ENCODE measurements at regions of chr13 and their contacts with region 1.

Region 1: DNA sequence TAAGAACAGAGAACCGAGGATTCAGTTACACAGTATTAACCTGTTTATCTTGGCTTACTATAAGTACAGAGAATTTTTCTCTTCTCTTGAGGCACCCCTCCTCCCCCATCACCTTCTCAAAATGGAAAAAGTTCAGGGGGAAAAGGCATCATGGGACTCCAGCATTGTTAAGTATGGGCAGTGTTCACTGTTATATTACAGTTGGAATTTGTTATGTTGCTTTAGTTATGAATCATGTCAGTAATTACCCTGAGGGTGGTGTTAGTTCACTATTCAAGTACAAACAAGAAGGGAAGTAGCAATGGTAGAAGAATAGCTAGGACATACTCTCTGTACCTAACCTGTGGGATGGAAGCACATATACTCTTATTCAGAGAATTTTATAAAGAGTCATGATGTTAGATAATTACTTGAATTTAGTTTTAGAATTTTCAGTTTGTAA is 12.0 kb downstream of the LPAR6 start:
- DNase-seq: no peak
- H3K4me3 Mint-ChIP-seq: peak overlapping the region; percentile 24
- H3K27ac Mint-ChIP-seq: peak overlapping the region; percentile 37
- H3K4me1 Mint-ChIP-seq: peaks cover 61% of the 10 kb centered on the region
- H3K27me3 Mint-ChIP-seq: no peaks in the 10 kb centered on the region

Region 2: GRCh38 chr13:48037346-48038173 is 363.3 kb before region 1 on chr13 and contains the start of gene NUDT15:
- intact Hi-C with region 1: loop called (anchors 5 kb)
- DNase-seq: peak; percentile 94
- H3K4me3 Mint-ChIP-seq: peak within 1 kb of the TSS; percentile 98
- H3K27ac Mint-ChIP-seq: peak within 1 kb of the TSS; percentile 99
- H3K4me1 Mint-ChIP-seq: peaks cover 46% of the 10 kb centered on the region
- H3K27me3 Mint-ChIP-seq: no peaks in the 10 kb centered on the region
- total RNA-seq, gene NUDT15: 15.3 and 16.8 TPM in 2 replicates

Region 3: DNA sequence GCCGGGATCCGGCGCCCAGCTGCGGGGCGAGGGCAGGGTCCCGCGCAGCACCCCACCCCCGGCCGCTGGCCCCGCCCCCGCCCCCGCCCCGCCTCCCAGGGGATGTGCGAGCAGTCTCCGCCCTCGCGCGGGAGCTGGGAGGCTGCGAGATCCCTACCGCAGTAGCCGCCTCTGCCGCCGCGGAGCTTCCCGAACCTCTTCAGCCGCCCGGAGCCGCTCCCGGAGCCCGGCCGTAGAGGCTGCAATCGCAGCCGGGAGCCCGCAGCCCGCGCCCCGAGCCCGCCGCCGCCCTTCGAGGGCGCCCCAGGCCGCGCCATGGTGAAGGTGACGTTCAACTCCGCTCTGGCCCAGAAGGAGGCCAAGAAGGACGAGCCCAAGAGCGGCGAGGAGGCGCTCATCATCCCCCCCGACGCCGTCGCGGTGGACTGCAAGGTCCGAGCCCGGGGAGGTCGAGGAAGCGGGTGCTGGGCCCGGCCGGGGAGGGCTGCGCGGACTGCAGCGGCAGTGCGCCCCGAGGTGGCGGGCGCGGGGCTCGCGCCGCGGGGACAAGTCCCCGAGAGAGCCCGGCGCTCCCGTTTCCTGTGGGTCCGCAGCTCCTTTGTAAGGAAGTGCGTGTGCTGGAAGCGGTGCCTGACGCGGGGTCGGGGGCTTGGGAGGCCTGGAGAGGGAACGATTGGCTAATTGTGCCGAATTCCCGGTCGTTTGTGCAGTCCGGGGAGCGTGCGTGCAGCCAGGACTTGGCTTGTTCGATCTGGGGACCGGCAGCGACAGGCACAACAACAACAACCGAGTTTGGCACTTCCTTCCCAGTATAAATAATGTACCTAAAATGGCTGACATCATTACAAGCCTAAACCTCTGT is 167.6 kb before region 1 on chr13 and contains the start of gene ITM2B:
- intact Hi-C with region 1: loop called (anchors 1 kb)
- DNase-seq: peak; percentile 49
- H3K4me3 Mint-ChIP-seq: peak within 1 kb of the TSS; percentile 92
- H3K27ac Mint-ChIP-seq: peak within 1 kb of the TSS; percentile 80
- H3K4me1 Mint-ChIP-seq: peaks cover 50% of the 10 kb centered on the region
- H3K27me3 Mint-ChIP-seq: peaks cover 26% of the 10 kb centered on the region
- total RNA-seq, gene ITM2B: 56.2 and 61.2 TPM in 2 replicates

Region 4: GRCh38 chr13:48346583-48346982 is 54.3 kb before region 1 on chr13:
- intact Hi-C with region 1: loop called (anchors 1 kb)
- DNase-seq: no peak
- H3K4me3 Mint-ChIP-seq: no peak overlapping the region
- H3K27ac Mint-ChIP-seq: no peak overlapping the region
- H3K4me1 Mint-ChIP-seq: peaks cover 26% of the 10 kb centered on the region
- H3K27me3 Mint-ChIP-seq: no peaks in the 10 kb centered on the region

Region 5: GRCh38 chr13:48492470-48493065 is 91.7 kb after region 1 on chr13:
- intact Hi-C with region 1: loop called (anchors 2 kb)
- DNase-seq: peak; percentile 68
- H3K4me3 Mint-ChIP-seq: no peak overlapping the region
- H3K27ac Mint-ChIP-seq: no peak overlapping the region
- H3K4me1 Mint-ChIP-seq: peaks cover 39% of the 10 kb centered on the region
- H3K27me3 Mint-ChIP-seq: no peaks in the 10 kb centered on the region

Region 6: DNA sequence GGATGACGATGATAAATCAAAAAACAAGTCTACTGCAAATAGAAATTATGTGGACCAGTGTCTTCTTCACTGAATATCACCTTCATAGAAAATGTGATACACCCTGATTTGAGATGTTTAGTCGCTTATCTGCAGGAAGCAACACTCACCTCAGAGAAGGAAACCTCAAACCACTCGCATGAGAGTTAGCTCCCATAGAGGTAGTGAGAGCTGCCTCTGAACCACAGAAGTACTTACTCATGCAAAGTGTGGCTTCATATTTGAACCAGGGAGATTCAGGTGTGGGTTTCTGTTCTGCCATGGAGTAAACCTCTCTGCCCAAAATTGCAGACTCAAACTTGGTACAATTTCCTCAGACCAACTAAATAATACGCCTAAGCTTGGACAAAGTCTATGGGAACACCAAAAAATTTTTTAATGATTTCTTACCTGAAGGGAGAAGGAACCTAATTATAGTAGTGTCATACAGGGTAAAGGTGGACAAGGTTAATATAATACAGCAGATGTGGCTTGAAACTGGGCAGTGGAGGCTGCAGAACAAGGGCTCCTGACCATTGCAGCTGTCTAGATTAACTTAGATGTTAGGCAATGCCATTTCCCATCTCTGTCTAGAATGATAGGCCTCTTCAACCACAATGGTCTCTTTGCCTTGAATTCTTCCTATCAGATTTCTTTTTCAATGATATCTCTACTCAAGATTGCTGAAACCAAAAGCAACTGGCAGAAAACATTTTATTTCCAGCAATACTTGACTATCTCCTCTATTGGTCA is 161.6 kb after region 1 on chr13:
- intact Hi-C with region 1: loop called (anchors 1 kb)
- DNase-seq: peak; percentile 77
- H3K4me3 Mint-ChIP-seq: no peak overlapping the region
- H3K27ac Mint-ChIP-seq: no peak overlapping the region
- H3K4me1 Mint-ChIP-seq: peaks cover 59% of the 10 kb centered on the region
- H3K27me3 Mint-ChIP-seq: peaks cover 68% of the 10 kb centered on the region

Region 7: GRCh38 chr13:48885027-48885395 is 484.1 kb after region 1 on chr13:
- intact Hi-C with region 1: loop called (anchors 2 kb)
- DNase-seq: no peak
- H3K4me3 Mint-ChIP-seq: peak overlapping the region; percentile 10
- H3K27ac Mint-ChIP-seq: peak overlapping the region; percentile 89
- H3K4me1 Mint-ChIP-seq: peaks cover 65% of the 10 kb centered on the region
- H3K27me3 Mint-ChIP-seq: no peaks in the 10 kb centered on the region

Measured in activated T-helper 1 cell treated with anti-CD3 and anti-CD28 coated beads, Interleukin-12 subunit alpha, Interleukin-12 subunit beta, Interleukin-2, Interleukin-4 antibody, amounts not matched to agents 30 ng/mL and 10 ng/mL and 1 ng/mL, durations not matched to agents 14 hours and 24 hours and 36 hours (primary cell).